Astrocyte of the cerebellum (primary cell): ENCODE measurements at regions of chr1 and their contacts with region 1.

Region 1: GRCh38 chr1:27031235-27032118 is 18.8 kb upstream of the TENT5B start:
- DNase-seq: no peak
- H3K4me3 ChIP-seq: peak overlapping the region; percentile 26
- CTCF ChIP-seq: no peak

Region 2: GRCh38 chr1:27087371-27088220 is 56.1 kb after region 1 on chr1:
- in situ Hi-C with region 1: loop called (anchors 10 kb)
- DNase-seq: no peak
- H3K4me3 ChIP-seq: no peak overlapping the region
- CTCF ChIP-seq: no peak